Heart right ventricle (tissue), 16 donors: ENCODE measurements at regions of chr15 and their contacts with region 1.

Region 1: GRCh38 chr15:45871121-45871985 is 236.5 kb downstream of the SQOR start:
- DNase-seq: no peak
- ATAC-seq: no peak
- H3K4me3 ChIP-seq: no peak overlapping the region
- H3K27ac ChIP-seq: no peak overlapping the region
- H3K4me1 ChIP-seq: peaks cover 0 to 6% (median 0%) of the 10 kb centered on the region in 9 donors
- H3K27me3 ChIP-seq: no peaks in the 10 kb centered on the region
- CTCF ChIP-seq: no peak

Region 2: DNA sequence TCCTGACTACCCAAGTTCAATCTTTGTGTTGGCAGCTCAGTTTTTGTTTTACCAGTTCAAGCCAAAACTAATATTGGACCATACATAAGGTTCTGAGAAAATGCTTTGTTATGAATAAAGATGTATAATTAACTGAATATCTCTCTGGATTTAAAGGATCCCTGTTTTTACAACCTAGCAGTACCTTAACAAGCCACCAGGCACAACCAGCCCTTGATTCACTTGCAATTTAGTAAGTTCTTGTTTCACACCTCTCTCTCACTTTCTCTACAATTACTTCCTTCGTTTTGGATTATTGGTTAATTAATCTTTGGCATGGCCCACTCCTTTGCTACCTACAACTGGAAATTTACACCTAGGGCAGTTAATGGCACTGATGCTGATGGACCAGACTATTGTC is 295.4 kb after region 1 on chr15:
- intact Hi-C with region 1: loop called in 1 of 10 experiments (anchors 5 kb)
- DNase-seq: no peak
- ATAC-seq: no peak
- H3K4me3 ChIP-seq: no peak overlapping the region
- H3K27ac ChIP-seq: no peak overlapping the region
- H3K4me1 ChIP-seq: no peaks in the 10 kb centered on the region
- H3K27me3 ChIP-seq: no peaks in the 10 kb centered on the region
- CTCF ChIP-seq: no peak